HCT116 (cell line): ENCODE measurements at regions of chr4 and their contacts with region 1.

Region 1: DNA sequence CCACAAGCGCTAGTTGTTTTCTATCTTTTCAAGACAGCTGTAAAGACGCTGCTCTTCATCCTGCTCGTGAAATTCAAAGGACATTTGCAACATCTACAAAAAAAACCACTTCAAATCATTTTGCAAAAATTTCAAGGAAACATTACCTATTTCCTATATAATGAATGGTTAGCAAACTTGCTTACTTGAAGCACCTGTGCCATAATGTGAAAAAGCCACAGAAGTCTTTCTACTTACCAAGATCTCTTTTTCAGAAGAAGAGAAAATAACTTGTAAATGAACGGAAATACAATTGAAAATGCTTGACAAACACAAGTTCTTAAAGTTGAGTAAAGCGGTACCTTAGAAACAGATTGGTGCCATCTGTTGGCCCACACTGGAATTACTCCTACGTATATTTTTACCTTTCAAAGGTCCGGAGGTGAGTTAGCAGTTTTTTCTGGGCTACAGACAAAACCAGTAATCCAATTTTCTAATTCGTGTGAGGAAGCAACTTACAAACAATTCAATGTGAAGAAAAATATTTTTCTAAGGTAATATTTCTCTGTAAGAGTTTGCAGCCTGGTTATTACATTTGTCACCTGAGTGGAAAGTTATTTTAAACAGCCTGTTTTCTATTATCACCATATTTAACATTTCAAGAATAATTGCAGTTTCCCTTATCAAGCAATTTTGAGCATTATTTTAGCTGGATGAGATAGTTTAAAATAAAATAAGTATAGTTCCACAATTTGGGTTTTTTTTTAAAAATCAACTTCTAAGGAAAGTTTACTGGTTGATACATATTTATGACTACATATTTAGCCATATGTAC is at the start of gene TLR6:
- DNase-seq: peak; percentile 80
- ATAC-seq: peak; percentile 4; the same call in 1 of the 2 replicates
- H3K4me3 ChIP-seq: peak within 1 kb of the TSS; percentile 41 to 57
- H3K27ac ChIP-seq: peak within 1 kb of the TSS; percentile 84
- H3K4me1 ChIP-seq: peaks cover 19 to 49% of the 10 kb centered on the region in 2 experiments
- H3K27me3 ChIP-seq: no peaks in the 10 kb centered on the region
- CTCF ChIP-seq: peak; percentile 58 to 78 (median 64); a peak in 5 of 6 replicates
- POLR2A ChIP-seq: no peak
- RAD21 ChIP-seq: peak; percentile 53
- total RNA-seq, gene TLR6: 4.8 TPM

Region 2: DNA sequence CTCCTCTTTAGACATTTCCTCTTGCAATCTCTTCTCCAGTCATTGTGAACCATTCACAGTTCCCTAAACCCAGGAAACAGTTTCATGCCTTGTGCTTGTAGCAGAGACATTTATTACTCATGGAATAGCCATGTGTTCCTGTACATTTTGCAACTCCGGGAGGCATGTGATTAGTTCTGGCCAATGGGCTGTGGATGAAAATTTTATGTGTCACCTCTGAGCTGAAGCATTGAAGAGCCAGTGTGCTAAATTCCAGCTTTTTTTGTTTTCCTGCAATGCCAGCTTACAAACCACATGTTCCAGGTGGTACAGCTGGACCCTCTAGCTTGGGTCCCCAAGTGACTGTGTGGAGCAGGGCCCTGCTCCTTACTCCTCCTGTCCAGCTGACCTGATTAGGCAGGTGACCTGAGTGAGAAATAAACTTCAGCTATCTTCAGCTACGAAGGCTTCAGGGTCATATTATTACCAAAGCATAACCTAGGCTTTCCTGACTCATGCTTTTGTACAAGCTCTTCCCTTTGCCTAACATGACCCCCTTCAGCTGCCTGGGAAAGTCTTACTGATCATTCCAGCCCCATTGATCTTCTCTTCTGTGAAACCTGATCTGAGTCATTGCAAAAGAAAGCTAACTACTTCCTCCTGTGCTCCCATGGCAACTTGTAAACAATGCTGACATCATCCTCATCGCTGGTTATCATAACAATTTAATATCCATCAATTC is 696.1 kb before region 1 on chr4:
- CTCF ChIA-PET with region 1: interaction called, 3 read pairs
- POLR2A ChIA-PET with region 1: no interaction called
- RAD21 ChIA-PET with region 1: no interaction called
- intact Hi-C with region 1: loop called (anchors 10 kb)
- DNase-seq: peak; percentile 88
- ATAC-seq: peak; percentile 70
- H3K4me3 ChIP-seq: no peak overlapping the region
- H3K27ac ChIP-seq: peak overlapping the region; percentile 43
- H3K4me1 ChIP-seq: peaks cover 36 to 54% of the 10 kb centered on the region in 2 experiments
- H3K27me3 ChIP-seq: no peaks in the 10 kb centered on the region
- CTCF ChIP-seq: no peak
- POLR2A ChIP-seq: no peak
- RAD21 ChIP-seq: no peak

Region 3: GRCh38 chr4:38870098-38870808 is 13.5 kb after region 1 on chr4:
- CTCF ChIA-PET with region 1: interaction called, 17 read pairs
- POLR2A ChIA-PET with region 1: interaction called, 3 read pairs
- RAD21 ChIA-PET with region 1: no interaction called
- intact Hi-C with region 1: no loop called
- DNase-seq: no peak
- ATAC-seq: no peak
- H3K4me3 ChIP-seq: no peak overlapping the region
- H3K27ac ChIP-seq: no peak overlapping the region
- H3K4me1 ChIP-seq: peaks cover 7 to 28% of the 10 kb centered on the region in 2 experiments; a peak in 3 of 4 replicates
- H3K27me3 ChIP-seq: no peaks in the 10 kb centered on the region
- CTCF ChIP-seq: no peak
- POLR2A ChIP-seq: no peak
- RAD21 ChIP-seq: no peak

Region 4: GRCh38 chr4:38889143-38889542 is 32.4 kb after region 1 on chr4:
- CTCF ChIA-PET with region 1: interaction called, 20 read pairs
- POLR2A ChIA-PET with region 1: interaction called, 4 read pairs
- RAD21 ChIA-PET with region 1: no interaction called
- intact Hi-C with region 1: no loop called
- DNase-seq: peak; percentile 83
- ATAC-seq: peak; percentile 51
- H3K4me3 ChIP-seq: peak overlapping the region in 1 of 2 experiments; percentile 21; a peak in 2 of 4 replicates
- H3K27ac ChIP-seq: peak overlapping the region; percentile 66
- H3K4me1 ChIP-seq: peaks cover 22 to 29% of the 10 kb centered on the region in 2 experiments
- H3K27me3 ChIP-seq: no peaks in the 10 kb centered on the region
- CTCF ChIP-seq: no peak
- POLR2A ChIP-seq: no peak
- RAD21 ChIP-seq: no peak

Region 5: GRCh38 chr4:39103291-39103690 is 246.6 kb after region 1 on chr4:
- CTCF ChIA-PET with region 1: no interaction called
- POLR2A ChIA-PET with region 1: no interaction called
- RAD21 ChIA-PET with region 1: no interaction called
- intact Hi-C with region 1: no loop called
- DNase-seq: no peak
- ATAC-seq: 0 out of 2 replicates have a peak, but pooled peaks have one; percentile 34
- H3K4me3 ChIP-seq: no peak overlapping the region
- H3K27ac ChIP-seq: no peak overlapping the region
- H3K4me1 ChIP-seq: no peaks in the 10 kb centered on the region
- H3K27me3 ChIP-seq: no peaks in the 10 kb centered on the region
- CTCF ChIP-seq: 0 out of 6 replicates have a peak, but pooled peaks of 1 of the 3 experiments have one; percentile 6
- POLR2A ChIP-seq: no peak
- RAD21 ChIP-seq: peak; percentile 22; the same call in 1 of the 2 replicates